ENCODE measurements at regions of chrX and their contacts with region 1.

Region 1: GRCh38 chrX:14029425-14030173 is at the start of gene GEMIN8:
- DNase-seq: peak; percentile 86
- H3K4me3 ChIP-seq: peak within 1 kb of the TSS; percentile 79
- H3K27ac ChIP-seq: peak within 1 kb of the TSS; percentile 91
- H3K4me1 ChIP-seq: peaks cover 34% of the 10 kb centered on the region
- H3K27me3 ChIP-seq: no peaks in the 10 kb centered on the region
- CTCF ChIP-seq: no peak
- total RNA-seq, gene GEMIN8: 12.6 TPM

Region 2: DNA sequence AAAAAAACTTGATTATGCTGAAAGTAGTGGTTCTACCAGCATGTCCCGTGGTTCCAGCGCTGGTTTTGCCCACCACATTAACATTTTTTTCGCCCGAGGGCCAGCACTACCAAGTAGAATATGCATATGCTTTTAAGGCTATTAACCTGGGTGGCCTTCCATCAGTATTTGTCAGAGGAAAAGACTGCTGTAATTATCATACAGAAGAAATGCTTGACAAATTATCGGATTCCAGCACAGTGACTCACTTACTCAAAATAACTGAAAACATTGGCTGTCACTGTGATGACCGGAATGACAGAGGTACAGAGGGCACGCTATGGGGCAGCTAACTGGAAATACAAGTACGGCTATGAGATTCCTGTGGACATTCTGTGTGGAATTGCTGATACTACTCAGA is 1203.8 kb before region 1 on chrX:
- intact Hi-C with region 1: no loop called
- DNase-seq: no peak
- H3K4me3 ChIP-seq: no peak overlapping the region
- H3K27ac ChIP-seq: no peak overlapping the region
- H3K4me1 ChIP-seq: no peaks in the 10 kb centered on the region
- H3K27me3 ChIP-seq: no peaks in the 10 kb centered on the region
- CTCF ChIP-seq: no peak

Region 3: GRCh38 chrX:13506574-13506973 is 523.0 kb before region 1 on chrX:
- intact Hi-C with region 1: loop called (anchors 2 kb)
- DNase-seq: peak; percentile 15
- H3K4me3 ChIP-seq: no peak overlapping the region
- H3K27ac ChIP-seq: no peak overlapping the region
- H3K4me1 ChIP-seq: no peaks in the 10 kb centered on the region
- H3K27me3 ChIP-seq: no peaks in the 10 kb centered on the region
- CTCF ChIP-seq: peak; percentile 77

Region 4: DNA sequence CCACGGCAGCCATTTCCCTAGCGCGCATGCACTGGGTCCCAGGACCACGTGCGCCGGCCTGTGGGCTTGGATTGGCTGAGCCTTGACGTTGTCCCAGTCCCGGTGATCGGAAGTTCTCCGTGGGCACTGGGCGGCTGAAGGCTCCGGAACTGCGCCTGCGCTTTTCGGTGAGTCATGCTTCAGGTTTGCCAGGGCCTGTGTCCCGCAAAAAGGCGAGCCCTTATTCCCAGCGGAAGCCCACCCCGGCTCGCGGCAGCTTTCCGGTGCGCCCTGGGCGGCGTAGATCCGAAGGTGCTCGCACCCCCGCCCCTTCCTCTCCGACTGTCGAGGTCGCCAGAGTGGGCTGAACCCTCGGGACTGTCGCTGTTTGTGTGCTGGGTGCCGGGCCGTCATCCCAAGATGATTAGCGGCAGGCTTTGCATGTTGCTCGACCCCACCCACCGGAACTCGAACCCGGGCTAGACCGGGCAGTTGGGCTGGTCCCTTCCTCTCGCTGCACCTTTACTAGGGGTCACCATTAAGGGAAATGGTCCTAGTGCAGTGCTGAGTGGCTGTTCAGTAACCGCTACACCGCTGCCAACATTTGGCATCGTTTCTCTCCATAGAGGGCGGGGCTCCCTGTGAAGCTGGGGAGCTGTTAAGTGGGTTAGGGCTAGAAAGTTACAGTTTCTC is 376.4 kb before region 1 on chrX and contains the start of gene TCEANC:
- intact Hi-C with region 1: loop called (anchors 5 kb)
- DNase-seq: peak; percentile 94
- H3K4me3 ChIP-seq: peak within 1 kb of the TSS; percentile 71
- H3K27ac ChIP-seq: peak within 1 kb of the TSS; percentile 96
- H3K4me1 ChIP-seq: peaks cover 14% of the 10 kb centered on the region
- H3K27me3 ChIP-seq: no peaks in the 10 kb centered on the region
- CTCF ChIP-seq: no peak
- total RNA-seq, gene TCEANC: 7.9 TPM

Region 5: GRCh38 chrX:13750204-13750603 is 279.4 kb before region 1 on chrX:
- intact Hi-C with region 1: loop called (anchors 5 kb)
- DNase-seq: no peak
- H3K4me3 ChIP-seq: no peak overlapping the region
- H3K27ac ChIP-seq: no peak overlapping the region
- H3K4me1 ChIP-seq: no peaks in the 10 kb centered on the region
- H3K27me3 ChIP-seq: no peaks in the 10 kb centered on the region
- CTCF ChIP-seq: peak; percentile 62

Measured in left ventricle myocardium inferior (tissue), 1 donor.